ENCODE measurements at regions of chr5 and their contacts with region 1.

Region 1: GRCh38 chr5:95781101-95781583 is 41.4 kb downstream of the GLRX start:
- DNase-seq: peak; percentile 86
- ATAC-seq: peak; percentile 99
- H3K4me3 ChIP-seq: peak overlapping the region in 1 of 5 experiments; percentile 11
- H3K4me3 Mint-ChIP-seq: peak overlapping the region; percentile 64
- H3K27ac ChIP-seq: no peak overlapping the region
- H3K27ac Mint-ChIP-seq: peak overlapping the region; percentile 11
- H3K4me1 ChIP-seq: peaks cover 0 to 4% of the 10 kb centered on the region in 2 donors
- H3K4me1 Mint-ChIP-seq: peaks cover 5% of the 10 kb centered on the region
- H3K27me3 ChIP-seq: no peaks in the 10 kb centered on the region
- H3K27me3 Mint-ChIP-seq: no peaks in the 10 kb centered on the region
- CTCF ChIP-seq: peak; percentile 96

Region 2: GRCh38 chr5:94674490-94675382 is 1106.4 kb before region 1 on chr5:
- CTCF ChIA-PET with region 1: no interaction called
- POLR2A ChIA-PET with region 1: no interaction called
- intact Hi-C with region 1: no loop called
- DNase-seq: no peak
- ATAC-seq: no peak
- H3K4me3 ChIP-seq: no peak overlapping the region
- H3K4me3 Mint-ChIP-seq: no peak overlapping the region
- H3K27ac ChIP-seq: no peak overlapping the region
- H3K27ac Mint-ChIP-seq: no peak overlapping the region
- H3K4me1 ChIP-seq: no peaks in the 10 kb centered on the region
- H3K4me1 Mint-ChIP-seq: peaks cover 3% of the 10 kb centered on the region
- H3K27me3 ChIP-seq: no peaks in the 10 kb centered on the region
- H3K27me3 Mint-ChIP-seq: no peaks in the 10 kb centered on the region
- CTCF ChIP-seq: no peak

Region 3: GRCh38 chr5:95730730-95731570 is 50.2 kb before region 1 on chr5 and contains the start of gene RHOBTB3:
- CTCF ChIA-PET with region 1: interaction called, 17 read pairs
- POLR2A ChIA-PET with region 1: no interaction called
- intact Hi-C with region 1: no loop called
- DNase-seq: peak; percentile 61
- ATAC-seq: peak; percentile 70
- H3K4me3 ChIP-seq: peak within 1 kb of the TSS; percentile 51 to 75 (median 60)
- H3K4me3 Mint-ChIP-seq: peak within 1 kb of the TSS; percentile 90
- H3K27ac ChIP-seq: no peak within 1 kb of the TSS
- H3K27ac Mint-ChIP-seq: peak within 1 kb of the TSS; percentile 78
- H3K4me1 ChIP-seq: peaks cover 8 to 13% of the 10 kb centered on the region in 2 donors
- H3K4me1 Mint-ChIP-seq: peaks cover 29% of the 10 kb centered on the region
- H3K27me3 ChIP-seq: peaks cover 0 to 10% (median 6%) of the 10 kb centered on the region in 4 experiments
- H3K27me3 Mint-ChIP-seq: peaks cover 12% of the 10 kb centered on the region
- CTCF ChIP-seq: no peak
- total RNA-seq, gene RHOBTB3: 5.0 and 5.3 TPM in 2 replicates

Region 4: DNA sequence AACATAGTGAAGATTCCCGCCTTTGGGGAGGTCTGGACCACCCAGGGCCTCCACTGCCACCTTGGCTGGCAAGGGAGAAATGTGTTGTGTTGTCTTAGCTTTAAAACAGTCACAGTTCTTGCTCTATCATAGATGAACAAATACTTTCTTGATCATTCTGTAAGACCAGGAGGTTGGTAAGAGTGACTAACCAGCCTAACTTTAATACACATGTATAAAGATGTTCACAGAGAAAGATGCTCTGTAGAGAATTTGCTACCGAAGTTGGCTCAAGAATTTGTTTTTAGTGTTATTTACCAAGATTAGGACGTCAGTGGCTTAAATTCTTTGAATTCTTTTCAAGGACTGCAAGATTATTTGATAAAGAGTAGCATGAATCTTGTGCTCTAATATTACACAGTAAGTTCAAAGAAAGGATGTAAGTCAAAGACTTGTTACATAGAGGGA is 13.0 kb after region 1 on chr5:
- CTCF ChIA-PET with region 1: interaction called, 18 read pairs
- POLR2A ChIA-PET with region 1: no interaction called
- intact Hi-C with region 1: no loop called
- DNase-seq: no peak
- ATAC-seq: no peak
- H3K4me3 ChIP-seq: no peak overlapping the region
- H3K4me3 Mint-ChIP-seq: no peak overlapping the region
- H3K27ac ChIP-seq: no peak overlapping the region
- H3K27ac Mint-ChIP-seq: no peak overlapping the region
- H3K4me1 ChIP-seq: no peaks in the 10 kb centered on the region
- H3K4me1 Mint-ChIP-seq: peaks cover 4% of the 10 kb centered on the region
- H3K27me3 ChIP-seq: no peaks in the 10 kb centered on the region
- H3K27me3 Mint-ChIP-seq: no peaks in the 10 kb centered on the region
- CTCF ChIP-seq: no peak

Region 5: GRCh38 chr5:95817440-95817839 is 36.3 kb after region 1 on chr5:
- CTCF ChIA-PET with region 1: interaction called, 65 read pairs
- POLR2A ChIA-PET with region 1: interaction called, 5 read pairs
- intact Hi-C with region 1: loop called (anchors 1 kb)
- DNase-seq: no peak
- ATAC-seq: no peak
- H3K4me3 ChIP-seq: peak overlapping the region in 3 of 5 experiments; percentile 51 to 70 (median 64)
- H3K4me3 Mint-ChIP-seq: peak overlapping the region; percentile 86
- H3K27ac ChIP-seq: peak overlapping the region; percentile 64 to 90
- H3K27ac Mint-ChIP-seq: peak overlapping the region; percentile 94
- H3K4me1 ChIP-seq: peaks cover 47 to 50% of the 10 kb centered on the region in 2 donors
- H3K4me1 Mint-ChIP-seq: peaks cover 80% of the 10 kb centered on the region
- H3K27me3 ChIP-seq: no peaks in the 10 kb centered on the region
- H3K27me3 Mint-ChIP-seq: no peaks in the 10 kb centered on the region
- CTCF ChIP-seq: no peak

Region 6: DNA sequence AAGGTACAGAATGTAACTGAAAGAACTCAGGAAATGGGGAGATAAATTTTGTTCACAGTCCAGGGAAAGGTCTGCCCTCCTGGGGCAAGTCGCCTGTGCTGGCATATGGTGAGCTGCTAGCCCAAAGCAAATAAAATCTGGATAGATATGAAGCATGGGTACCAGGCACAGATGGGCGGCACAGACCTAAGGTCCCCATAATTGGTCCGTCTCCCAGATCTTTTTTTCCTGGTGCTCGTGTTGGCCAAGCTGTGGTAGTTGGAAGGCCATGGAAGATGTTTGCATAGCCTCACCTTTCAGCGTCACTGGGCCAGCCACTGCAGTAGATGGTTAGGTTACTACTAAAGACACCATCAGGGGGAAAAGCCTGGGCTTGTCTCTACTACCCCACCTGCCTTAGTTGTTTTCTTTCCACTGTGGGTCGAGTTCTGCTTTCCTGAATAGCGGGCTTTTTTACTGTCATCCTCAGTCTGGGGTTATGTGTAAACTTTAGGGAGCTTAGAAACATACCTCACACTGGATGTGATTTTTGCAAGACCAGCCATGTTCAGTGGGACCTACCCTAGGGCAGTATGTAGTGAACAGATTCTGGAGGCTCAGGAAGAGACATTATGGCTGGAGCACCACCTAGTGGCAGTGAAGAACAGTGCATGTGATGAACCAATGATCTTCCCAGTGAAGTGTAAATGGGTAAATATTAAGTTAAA is 65.6 kb after region 1 on chr5:
- CTCF ChIA-PET with region 1: interaction called, 748 read pairs
- POLR2A ChIA-PET with region 1: interaction called, 4 read pairs
- intact Hi-C with region 1: loop called (anchors 1 kb)
- DNase-seq: peak; percentile 82
- ATAC-seq: peak; percentile 77
- H3K4me3 ChIP-seq: no peak overlapping the region
- H3K4me3 Mint-ChIP-seq: no peak overlapping the region
- H3K27ac ChIP-seq: no peak overlapping the region
- H3K27ac Mint-ChIP-seq: peak overlapping the region; percentile 46
- H3K4me1 ChIP-seq: peaks cover 9 to 10% of the 10 kb centered on the region in 2 donors
- H3K4me1 Mint-ChIP-seq: peaks cover 12% of the 10 kb centered on the region
- H3K27me3 ChIP-seq: no peaks in the 10 kb centered on the region
- H3K27me3 Mint-ChIP-seq: no peaks in the 10 kb centered on the region
- CTCF ChIP-seq: peak; percentile 95

Region 7: DNA sequence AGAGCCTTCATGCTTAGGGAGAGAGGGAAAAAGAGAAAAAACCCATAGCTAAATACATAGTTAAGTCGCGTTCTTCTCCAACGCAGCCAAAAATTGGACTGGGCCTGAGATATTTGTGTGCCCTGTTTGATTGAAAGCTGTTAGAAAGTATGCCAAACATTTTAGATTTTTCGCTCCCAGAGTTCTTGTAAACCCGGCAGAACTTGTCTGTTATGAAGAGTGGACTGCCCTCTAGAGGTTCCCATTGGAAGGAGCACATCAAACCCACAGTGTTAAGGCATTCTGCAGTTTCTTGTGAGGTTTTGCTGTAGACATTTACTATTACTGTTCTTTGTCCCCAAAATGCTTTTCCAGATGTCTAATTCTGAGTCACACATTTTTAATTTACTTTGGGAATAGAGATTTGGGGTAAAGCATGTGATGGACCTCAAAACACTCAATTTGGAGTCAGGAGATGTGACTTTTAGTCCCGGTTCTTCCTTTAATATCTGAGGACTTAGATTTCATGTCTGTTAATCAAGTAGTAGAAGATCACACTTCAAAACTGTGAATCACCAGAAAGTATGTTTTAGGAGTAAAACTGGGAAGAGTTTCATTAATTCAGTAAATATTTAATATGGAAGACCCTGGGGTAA is 555.3 kb after region 1 on chr5:
- CTCF ChIA-PET with region 1: interaction called, 11 read pairs
- POLR2A ChIA-PET with region 1: no interaction called
- intact Hi-C with region 1: loop called (anchors 1 kb)
- DNase-seq: peak; percentile 75
- ATAC-seq: peak; percentile 78
- H3K4me3 ChIP-seq: no peak overlapping the region
- H3K4me3 Mint-ChIP-seq: no peak overlapping the region
- H3K27ac ChIP-seq: no peak overlapping the region
- H3K27ac Mint-ChIP-seq: no peak overlapping the region
- H3K4me1 ChIP-seq: peaks cover 0 to 4% of the 10 kb centered on the region in 2 donors
- H3K4me1 Mint-ChIP-seq: no peaks in the 10 kb centered on the region
- H3K27me3 ChIP-seq: no peaks in the 10 kb centered on the region
- H3K27me3 Mint-ChIP-seq: peaks cover 15% of the 10 kb centered on the region
- CTCF ChIP-seq: peak; percentile 88

Measured in B cell (primary cell).